Heart right ventricle (tissue), 16 donors: ENCODE measurements at regions of chr16 and their contacts with region 1.

Region 1: DNA sequence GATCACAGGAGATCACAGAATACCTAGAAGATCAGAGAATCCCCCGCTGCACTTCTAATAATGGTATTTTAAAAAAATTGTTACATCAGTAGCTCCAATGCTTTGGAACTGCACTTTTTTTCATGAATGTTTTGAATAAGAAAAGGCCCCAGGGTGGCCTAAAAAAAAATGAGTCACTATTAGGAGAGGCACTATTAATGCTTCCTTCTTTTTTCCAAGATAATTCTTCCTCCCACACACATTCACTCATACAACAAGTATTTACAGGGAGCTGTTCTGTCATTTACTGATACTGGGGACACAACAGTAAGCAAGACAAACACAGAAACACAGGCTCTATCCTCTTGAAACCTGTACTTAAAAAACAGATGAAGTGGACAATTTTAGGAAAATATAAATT is 675 bp upstream of the PDZD9 start:
- DNase-seq: no peak
- ATAC-seq: peak in 1 of 8 donors; percentile 41
- H3K4me3 ChIP-seq: no peak overlapping the region
- H3K27ac ChIP-seq: no peak overlapping the region
- H3K4me1 ChIP-seq: peaks cover 3 to 37% (median 15%) of the 10 kb centered on the region in 9 donors
- H3K27me3 ChIP-seq: no peaks in the 10 kb centered on the region
- CTCF ChIP-seq: no peak

Region 2: GRCh38 chr16:21982108-21982507 is 19.5 kb before region 1 on chr16:
- intact Hi-C with region 1: no loop called
- DNase-seq: no peak
- ATAC-seq: no peak
- H3K4me3 ChIP-seq: no peak overlapping the region
- H3K27ac ChIP-seq: no peak overlapping the region
- H3K4me1 ChIP-seq: peaks cover 0 to 23% (median 16%) of the 10 kb centered on the region in 9 donors
- H3K27me3 ChIP-seq: no peaks in the 10 kb centered on the region
- CTCF ChIP-seq: no peak

Region 3: GRCh38 chr16:22077700-22078313 is 76.2 kb after region 1 on chr16:
- intact Hi-C with region 1: loop called (anchors 1 to 5 kb)
- DNase-seq: peak; percentile 37 to 67
- ATAC-seq: peak in 6 of 8 donors; percentile 38 to 70 (median 54)
- H3K4me3 ChIP-seq: no peak overlapping the region
- H3K27ac ChIP-seq: no peak overlapping the region
- H3K4me1 ChIP-seq: peaks cover 0 to 12% (median 3%) of the 10 kb centered on the region in 9 donors
- H3K27me3 ChIP-seq: no peaks in the 10 kb centered on the region
- CTCF ChIP-seq: peak; percentile 76 to 91 (median 83)

Region 4: DNA sequence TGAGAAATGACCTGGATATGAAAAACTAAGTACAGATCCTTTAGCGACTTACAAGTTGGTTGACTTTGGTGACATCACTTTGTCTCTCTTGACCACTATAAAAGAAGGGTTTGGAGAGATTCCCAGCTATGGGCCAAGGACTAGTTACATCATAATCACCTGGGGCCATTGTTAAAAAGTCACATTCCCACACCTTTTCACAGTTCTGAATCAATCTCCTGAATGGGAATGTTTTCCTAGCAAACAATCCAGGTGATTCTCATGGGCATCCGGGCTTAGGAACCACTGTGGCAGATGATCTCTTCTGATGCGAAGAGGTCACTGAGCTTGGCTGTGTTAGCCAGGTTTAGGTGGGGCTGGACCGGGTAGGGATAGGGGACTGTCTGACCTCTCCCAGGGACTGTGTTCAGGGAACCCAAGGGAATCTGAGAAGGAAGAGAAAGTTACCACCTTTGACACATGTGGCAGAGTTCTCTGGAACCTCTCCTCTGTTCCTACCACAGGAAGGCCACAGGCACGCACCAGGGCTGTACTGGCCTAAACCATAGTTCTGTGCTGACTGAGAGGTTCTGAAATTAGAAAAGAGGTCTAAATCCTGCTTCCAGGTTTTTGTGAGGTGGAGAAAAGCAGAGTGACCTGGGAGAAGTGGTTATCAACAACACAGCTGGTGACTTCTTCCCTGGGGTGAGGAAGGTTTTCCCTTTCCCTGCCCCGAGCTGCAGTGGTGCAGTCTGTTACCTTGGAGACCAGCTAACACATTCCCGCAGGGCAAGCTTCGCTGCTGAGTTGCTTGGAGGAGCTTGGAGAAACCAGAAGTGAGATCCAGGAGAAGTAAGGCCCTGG is 90.4 kb after region 1 on chr16 and contains the start of gene VWA3A:
- intact Hi-C with region 1: loop called in 4 of 10 experiments (anchors 5 kb)
- DNase-seq: no peak
- ATAC-seq: peak in 7 of 8 donors; percentile 56 to 82 (median 69)
- H3K4me3 ChIP-seq: no peak within 1 kb of the TSS
- H3K27ac ChIP-seq: peak within 1 kb of the TSS in 2 of 10 donors; percentile 40 to 51
- H3K4me1 ChIP-seq: peaks cover 0 to 28% (median 6%) of the 10 kb centered on the region in 9 donors
- H3K27me3 ChIP-seq: peaks cover 0 to 2% (median 0%) of the 10 kb centered on the region in 7 donors
- CTCF ChIP-seq: no peak
- total RNA-seq, gene VWA3A: 0.25 to 1.1 (median 0.31) TPM in 9 of 10 donors, not detected in the other

Region 5: DNA sequence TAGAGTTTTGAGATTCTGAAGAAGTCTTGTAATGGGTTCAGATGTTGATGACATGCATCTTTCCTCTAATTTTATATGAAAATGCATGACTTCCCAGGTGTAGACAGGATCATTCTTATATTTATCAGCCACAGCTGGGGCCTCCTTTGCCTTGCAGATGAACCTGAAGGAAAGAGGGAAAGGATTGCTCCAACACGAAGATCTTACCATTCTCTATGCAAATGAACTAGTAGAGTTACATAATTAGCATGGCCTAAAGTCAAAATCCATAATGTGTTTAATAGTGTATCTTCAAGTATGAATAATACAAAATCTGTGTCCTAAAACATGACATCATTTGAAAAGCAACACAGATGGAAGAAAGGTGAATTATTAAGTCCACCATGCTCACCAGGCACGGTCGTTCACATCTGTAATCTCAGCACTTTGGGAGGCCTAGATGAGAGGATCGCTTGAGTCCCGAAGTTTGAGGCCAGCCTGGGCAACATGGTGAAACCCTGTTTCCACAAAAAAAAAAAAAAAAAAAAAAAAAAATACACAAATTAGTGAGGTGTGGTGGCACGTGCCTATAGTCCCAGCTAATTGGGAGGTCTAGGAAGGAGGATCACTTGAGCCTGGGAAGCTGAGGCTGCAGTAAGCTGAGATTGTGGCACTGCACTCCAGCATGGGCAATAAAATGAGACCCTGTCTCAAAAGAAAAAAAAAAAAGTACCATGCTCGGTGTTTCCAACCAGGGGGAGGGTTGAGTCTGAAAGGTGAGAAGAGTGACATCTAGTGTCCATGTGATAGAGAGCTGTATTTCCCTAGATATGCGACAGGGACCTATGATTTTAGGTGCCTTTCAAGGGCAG is 97.0 kb after region 1 on chr16:
- intact Hi-C with region 1: loop called in 5 of 10 experiments (anchors 2 to 5 kb)
- DNase-seq: peak in 1 of 2 donors; percentile 12
- ATAC-seq: peak in 7 of 8 donors; percentile 42 to 76 (median 66)
- H3K4me3 ChIP-seq: no peak overlapping the region
- H3K27ac ChIP-seq: no peak overlapping the region
- H3K4me1 ChIP-seq: peaks cover 0 to 2% (median 0%) of the 10 kb centered on the region in 9 donors
- H3K27me3 ChIP-seq: peaks cover 0 to 7% (median 0%) of the 10 kb centered on the region in 7 donors
- CTCF ChIP-seq: peak in 8 of 9 donors; percentile 33 to 74 (median 60)